ENCODE measurements at regions of chr17 and their contacts with region 1.

Region 1: DNA sequence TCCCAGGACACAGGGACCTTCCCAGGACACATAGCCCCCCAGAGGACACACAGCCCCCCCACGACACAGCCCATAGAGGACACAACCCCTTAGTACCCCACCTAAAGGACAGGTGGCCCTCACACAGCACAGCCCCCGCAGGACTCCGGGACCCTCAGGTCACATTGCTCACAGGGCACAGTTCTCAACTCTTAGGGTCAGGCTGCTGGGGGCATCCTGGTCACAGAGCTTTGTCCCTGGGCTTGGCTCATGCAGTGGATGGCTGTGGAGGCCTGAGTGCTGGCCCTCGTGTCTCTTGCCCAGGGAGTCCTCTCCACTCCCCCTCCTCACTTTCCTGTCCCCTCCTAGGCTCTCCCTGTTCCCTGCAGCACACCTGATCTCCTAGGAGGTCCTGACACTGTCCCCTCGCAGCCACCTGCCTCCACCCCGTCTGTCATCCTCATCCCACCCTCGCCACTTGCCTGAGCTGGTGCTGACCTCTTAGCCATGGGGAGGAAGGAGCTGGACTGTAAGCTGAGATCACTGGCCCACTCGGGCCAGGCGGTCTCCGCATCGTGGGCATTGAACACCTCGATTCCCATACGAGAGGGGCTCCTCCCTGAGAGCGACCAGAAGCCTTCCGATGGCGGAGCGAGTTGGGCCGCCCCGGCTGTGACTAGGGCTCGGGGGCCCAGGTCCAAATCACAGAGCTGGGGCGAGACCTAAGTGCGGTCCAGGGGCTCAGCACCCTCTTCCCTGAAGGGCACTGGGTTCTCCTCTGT is 1.4 kb upstream of the WDR45B start:
- DNase-seq: no peak
- ATAC-seq: no peak
- H3K4me3 ChIP-seq: no peak overlapping the region
- H3K27ac ChIP-seq: peak overlapping the region in 1 of 4 donors; percentile 56
- H3K4me1 ChIP-seq: peaks cover 28% of the 10 kb centered on the region
- H3K27me3 ChIP-seq: no peaks in the 10 kb centered on the region
- CTCF ChIP-seq: no peak
- POLR2A ChIP-seq: no peak

Region 2: GRCh38 chr17:82292251-82293154 is 357.2 kb before region 1 on chr17:
- intact Hi-C with region 1: no loop called
- DNase-seq: peak; percentile 95 to 99 (median 98)
- ATAC-seq: peak; percentile 80
- H3K4me3 ChIP-seq: peak overlapping the region; percentile 71 to 76
- H3K27ac ChIP-seq: peak overlapping the region; percentile 96 to 100 (median 98)
- H3K4me1 ChIP-seq: peaks cover 67% of the 10 kb centered on the region
- H3K27me3 ChIP-seq: no peaks in the 10 kb centered on the region
- CTCF ChIP-seq: no peak
- POLR2A ChIP-seq: peak; percentile 83 to 99 (median 98)

Region 3: GRCh38 chr17:82702231-82702927 is 52.7 kb after region 1 on chr17:
- intact Hi-C with region 1: loop called (anchors 5 kb)
- DNase-seq: no peak
- ATAC-seq: no peak
- H3K4me3 ChIP-seq: no peak overlapping the region
- H3K27ac ChIP-seq: no peak overlapping the region
- H3K4me1 ChIP-seq: peaks cover 13% of the 10 kb centered on the region
- H3K27me3 ChIP-seq: no peaks in the 10 kb centered on the region
- CTCF ChIP-seq: no peak
- POLR2A ChIP-seq: no peak